Endothelial cell of umbilical vein (primary cell): ENCODE measurements at regions of chr11 and their contacts with region 1.

Region 1: DNA sequence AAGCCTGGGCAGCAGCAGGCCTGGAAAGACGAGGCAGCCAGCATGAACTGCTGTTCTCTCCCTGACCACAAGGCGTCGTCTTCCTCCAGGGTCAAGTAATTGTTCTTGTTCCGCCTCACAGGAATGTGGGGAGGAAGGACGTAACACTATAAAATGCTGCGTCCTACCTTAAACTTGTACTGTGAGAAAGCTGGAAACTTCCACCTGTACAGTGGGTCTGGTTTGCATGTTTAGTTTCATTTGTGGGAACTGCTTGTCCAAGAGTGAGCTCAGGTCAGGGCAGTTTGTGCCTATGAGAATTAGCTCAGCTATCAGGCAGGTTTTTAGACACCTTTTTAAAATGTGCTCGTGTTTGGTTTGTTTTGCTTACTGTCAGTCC is 55.2 kb downstream of the PANX1 start:
- DNase-seq: peak; percentile 71
- H3K4me3 ChIP-seq: no peak overlapping the region
- H3K27ac ChIP-seq: no peak overlapping the region
- H3K4me1 ChIP-seq: no peaks in the 10 kb centered on the region
- H3K27me3 ChIP-seq: no peaks in the 10 kb centered on the region
- CTCF ChIP-seq: peak; percentile 84 to 89
- POLR2A ChIP-seq: no peak

Region 2: GRCh38 chr11:93921695-93922468 is 262.0 kb before region 1 on chr11:
- CTCF ChIA-PET with region 1: interaction called, 22 read pairs
- POLR2A ChIA-PET with region 1: no interaction called
- dilution Hi-C with region 1: no loop called
- intact Hi-C with region 1: loop called (anchors 5 kb)
- DNase-seq: peak; percentile 59
- H3K4me3 ChIP-seq: no peak overlapping the region
- H3K27ac ChIP-seq: no peak overlapping the region
- H3K4me1 ChIP-seq: no peaks in the 10 kb centered on the region
- H3K27me3 ChIP-seq: peaks cover 0 to 2% of the 10 kb centered on the region in 2 experiments
- CTCF ChIP-seq: peak; percentile 57 to 82
- POLR2A ChIP-seq: no peak

Region 3: DNA sequence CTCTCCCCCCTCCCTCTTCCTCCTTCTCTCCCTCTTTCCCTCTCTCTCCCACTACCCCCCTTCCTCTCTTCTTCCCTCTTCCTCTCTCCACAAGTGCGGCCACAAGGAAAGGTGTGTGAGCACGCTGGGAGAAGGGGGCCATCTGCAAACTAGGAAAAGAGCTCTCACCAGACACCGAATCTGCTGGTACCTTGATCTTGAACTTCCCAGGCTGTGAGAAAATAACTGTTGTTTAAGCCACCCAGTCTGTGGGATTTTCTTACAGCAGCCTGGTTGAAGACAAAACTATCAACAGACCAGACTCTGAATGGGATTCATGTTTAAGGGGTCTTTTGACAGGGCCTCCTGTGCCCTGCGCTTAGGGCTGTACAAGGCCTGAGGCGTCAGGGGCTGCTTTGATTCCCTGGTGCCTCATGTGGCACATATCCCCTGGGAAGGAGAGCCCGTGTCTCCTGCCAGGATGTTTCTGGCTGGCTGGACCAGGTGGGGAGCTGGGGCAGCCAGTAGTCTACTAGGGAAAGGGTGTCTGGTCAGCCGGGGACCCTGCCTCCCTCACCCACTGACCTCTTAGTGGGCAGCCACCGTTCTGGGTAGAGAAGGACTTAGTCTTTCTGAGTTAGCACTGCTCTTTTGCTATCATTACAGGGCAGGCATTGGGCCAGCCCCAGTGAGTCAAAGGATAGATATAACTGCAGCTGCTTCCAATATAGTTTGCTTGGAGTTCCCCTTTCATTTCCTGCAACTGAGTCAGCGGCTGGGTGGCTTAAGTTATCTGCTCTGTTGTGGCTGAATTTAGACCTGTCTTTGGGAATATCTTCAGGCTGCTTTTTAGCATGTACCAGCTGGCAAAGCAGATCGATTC is 49.0 kb before region 1 on chr11:
- CTCF ChIA-PET with region 1: interaction called, 64 read pairs
- POLR2A ChIA-PET with region 1: no interaction called
- dilution Hi-C with region 1: no loop called
- intact Hi-C with region 1: no loop called
- DNase-seq: peak; percentile 93
- H3K4me3 ChIP-seq: peak overlapping the region in 2 of 3 experiments; percentile 20 to 32
- H3K27ac ChIP-seq: peak overlapping the region; percentile 98
- H3K4me1 ChIP-seq: peaks cover 51% of the 10 kb centered on the region
- H3K27me3 ChIP-seq: no peaks in the 10 kb centered on the region
- CTCF ChIP-seq: no peak
- POLR2A ChIP-seq: no peak

Region 4: DNA sequence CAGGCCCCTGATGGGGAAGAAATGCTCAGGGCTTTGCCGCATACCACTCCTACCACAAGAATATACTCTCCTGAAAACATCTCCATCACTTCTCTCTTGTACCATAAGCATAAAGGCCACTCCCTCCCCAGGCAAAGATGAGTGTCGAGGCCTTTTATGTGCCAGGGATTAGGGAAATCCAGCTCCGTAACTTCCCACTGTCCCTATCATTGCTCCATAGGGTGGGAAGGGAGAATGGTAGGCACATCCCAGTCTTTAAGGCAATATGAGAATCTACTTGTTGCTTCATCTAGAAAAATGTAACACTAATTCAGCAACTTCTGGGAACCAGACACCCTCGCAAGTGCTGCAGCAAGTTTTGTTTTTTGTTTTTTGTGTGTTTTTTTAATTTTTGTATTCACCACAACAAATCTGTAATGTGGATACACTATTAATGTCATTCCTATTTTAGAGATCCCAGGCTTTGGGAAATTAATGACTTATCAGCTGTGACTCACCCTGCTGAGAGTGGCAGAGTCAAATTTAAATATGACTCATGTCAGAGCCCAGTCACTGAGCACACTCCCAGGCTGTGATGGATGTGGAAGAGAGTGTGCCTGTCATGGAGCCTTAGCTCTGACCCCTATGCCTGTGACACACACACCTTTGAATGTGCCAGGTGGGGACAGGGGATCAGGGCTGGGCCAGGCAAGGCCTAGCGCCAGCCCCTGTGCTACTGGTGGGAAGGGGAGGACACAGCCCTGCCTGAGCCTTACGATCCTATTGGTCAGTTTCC is 31.8 kb before region 1 on chr11:
- CTCF ChIA-PET with region 1: interaction called, 17 read pairs
- POLR2A ChIA-PET with region 1: no interaction called
- dilution Hi-C with region 1: no loop called
- intact Hi-C with region 1: loop called (anchors 2 kb)
- DNase-seq: peak; percentile 81
- H3K4me3 ChIP-seq: no peak overlapping the region
- H3K27ac ChIP-seq: peak overlapping the region; percentile 34
- H3K4me1 ChIP-seq: peaks cover 34% of the 10 kb centered on the region
- H3K27me3 ChIP-seq: no peaks in the 10 kb centered on the region
- CTCF ChIP-seq: no peak
- POLR2A ChIP-seq: no peak

Region 5: DNA sequence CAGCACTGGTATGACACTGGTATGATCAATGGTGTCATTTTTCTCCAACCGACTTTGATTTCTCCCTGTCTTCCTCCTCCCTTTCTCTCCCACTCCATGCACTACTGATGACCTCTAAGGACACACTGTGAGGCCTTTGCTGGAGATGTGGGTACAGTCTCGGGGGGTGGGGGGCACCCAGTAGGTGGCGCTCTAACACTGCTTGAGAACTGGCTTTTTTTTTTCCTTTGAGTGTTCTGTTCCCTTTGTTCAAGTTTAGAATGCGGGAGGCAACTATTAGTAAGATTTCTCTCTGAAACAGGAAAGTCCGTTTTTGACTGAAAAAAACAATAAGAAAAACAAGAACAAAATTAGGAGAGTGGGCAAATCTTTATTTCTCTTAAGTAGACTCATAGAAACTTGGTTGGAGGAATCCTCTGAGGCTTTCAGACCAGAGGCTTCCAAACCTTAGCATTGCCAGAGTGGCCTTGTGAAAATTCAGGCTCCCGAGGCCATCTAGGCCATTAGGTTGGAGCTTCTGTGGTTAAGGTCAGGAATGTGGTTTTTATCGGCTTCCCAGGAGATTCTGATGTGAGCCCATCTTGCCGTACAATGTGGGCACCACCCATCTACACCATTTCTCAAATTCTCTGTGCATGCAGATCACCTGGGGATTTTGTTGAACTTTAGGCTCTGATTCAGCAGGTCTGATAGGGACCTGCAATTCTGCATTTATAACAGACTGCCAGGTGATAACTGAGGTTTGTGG is 12.0 kb before region 1 on chr11:
- CTCF ChIA-PET with region 1: interaction called, 27 read pairs
- POLR2A ChIA-PET with region 1: no interaction called
- dilution Hi-C with region 1: no loop called
- intact Hi-C with region 1: no loop called
- DNase-seq: peak; percentile 52
- H3K4me3 ChIP-seq: no peak overlapping the region
- H3K27ac ChIP-seq: no peak overlapping the region
- H3K4me1 ChIP-seq: no peaks in the 10 kb centered on the region
- H3K27me3 ChIP-seq: no peaks in the 10 kb centered on the region
- CTCF ChIP-seq: peak; percentile 77 to 81
- POLR2A ChIP-seq: no peak

Region 6: GRCh38 chr11:94417386-94417987 is 233.6 kb after region 1 on chr11:
- CTCF ChIA-PET with region 1: interaction called, 20 read pairs
- POLR2A ChIA-PET with region 1: no interaction called
- dilution Hi-C with region 1: no loop called
- intact Hi-C with region 1: no loop called
- DNase-seq: peak; percentile 32
- H3K4me3 ChIP-seq: no peak overlapping the region
- H3K27ac ChIP-seq: no peak overlapping the region
- H3K4me1 ChIP-seq: no peaks in the 10 kb centered on the region
- H3K27me3 ChIP-seq: no peaks in the 10 kb centered on the region
- CTCF ChIP-seq: peak; percentile 15 to 24
- POLR2A ChIP-seq: no peak

Region 7: DNA sequence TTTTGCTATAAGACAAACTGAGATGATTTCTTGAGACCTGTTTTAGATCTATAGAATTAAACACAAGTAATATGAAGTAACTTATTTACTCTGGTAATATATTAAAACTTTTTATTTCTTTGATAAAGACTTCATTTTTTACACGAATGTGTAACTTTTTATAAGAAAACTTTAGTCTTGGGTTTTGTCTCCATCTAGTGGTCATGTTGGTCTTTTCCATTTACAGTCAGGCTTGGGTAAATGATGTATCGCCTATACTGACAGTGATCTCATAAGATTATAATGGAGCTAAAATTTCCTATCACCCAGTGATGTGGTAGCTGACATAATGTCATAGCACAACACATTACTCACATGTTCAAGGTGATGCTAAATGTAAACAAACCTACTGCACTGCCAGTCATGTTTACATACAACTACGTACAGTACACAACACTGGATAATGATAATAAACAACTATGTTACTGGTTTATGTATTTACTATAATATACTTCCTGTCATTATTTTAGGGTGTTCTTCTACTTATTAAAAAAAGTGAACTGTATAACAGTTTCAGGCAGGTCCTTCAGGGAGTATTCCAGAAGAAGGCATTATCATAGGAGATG is 320.9 kb after region 1 on chr11:
- CTCF ChIA-PET with region 1: interaction called, 17 read pairs
- POLR2A ChIA-PET with region 1: no interaction called
- dilution Hi-C with region 1: no loop called
- intact Hi-C with region 1: loop called (anchors 1 kb)
- DNase-seq: peak; percentile 66
- H3K4me3 ChIP-seq: no peak overlapping the region
- H3K27ac ChIP-seq: no peak overlapping the region
- H3K4me1 ChIP-seq: no peaks in the 10 kb centered on the region
- H3K27me3 ChIP-seq: peaks cover 0 to 2% of the 10 kb centered on the region in 2 experiments
- CTCF ChIP-seq: peak; percentile 33 to 40
- POLR2A ChIP-seq: no peak